Activated T-helper 2 cell treated with anti-CD3 and anti-CD28 coated beads, Interferon-gamma antibody, Interleukin-2, Interleukin-4, amounts not matched to agents 10 μg/mL and 5 μg/mL and 100 μg/mL, durations not matched to agents 14 hours and 24 hours and 36 hours (primary cell): ENCODE measurements at regions of chr7 and their contacts with region 1.

Region 1: DNA sequence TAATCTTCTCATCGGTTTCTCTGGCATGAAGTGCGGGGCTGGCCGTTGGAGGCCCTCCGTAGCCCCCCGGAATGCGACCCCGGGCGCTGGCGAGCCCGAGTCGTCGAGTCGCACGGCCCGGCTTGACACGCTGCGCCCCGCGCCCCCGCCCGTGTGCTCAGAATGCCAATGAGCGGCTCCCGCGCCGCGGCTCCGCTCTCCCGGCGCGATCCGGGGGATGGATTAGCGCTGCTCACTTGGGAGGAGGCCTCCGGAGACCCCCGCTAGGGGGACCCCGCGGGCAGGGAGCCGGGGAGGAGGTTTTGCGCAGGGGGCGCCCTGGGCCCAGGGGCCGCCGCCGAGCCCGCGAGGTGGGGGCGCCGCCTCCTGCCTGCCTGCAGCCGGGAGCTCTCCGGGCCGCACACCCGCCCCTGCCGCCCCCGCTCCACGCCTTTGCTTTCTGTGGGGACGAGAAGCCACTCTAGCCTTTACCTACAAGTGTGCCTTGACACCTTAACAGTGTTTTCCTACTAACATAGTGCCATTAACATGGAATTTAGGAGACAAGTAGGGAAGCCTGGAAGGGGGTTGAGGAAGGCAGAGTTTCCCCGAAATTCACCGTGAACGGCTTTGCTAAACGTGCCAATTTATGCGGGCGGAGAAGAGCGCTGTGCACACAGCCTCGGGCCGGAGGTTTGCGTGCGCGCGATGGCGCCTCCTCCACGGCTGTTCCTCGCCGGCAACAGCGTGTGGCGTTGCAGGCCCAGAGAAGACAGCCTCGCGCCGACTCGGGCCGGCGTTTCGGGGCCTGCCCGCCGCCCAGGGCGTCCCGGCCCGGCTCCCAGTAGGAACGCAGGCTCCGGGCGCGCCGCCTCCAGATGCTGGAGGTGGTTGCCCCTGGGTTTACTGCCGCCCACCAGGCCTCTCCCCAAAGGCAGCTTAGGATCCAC is 7.1 kb downstream of the SHH start:
- DNase-seq: peak; percentile 51
- H3K4me3 Mint-ChIP-seq: peak overlapping the region; percentile 42
- H3K27ac Mint-ChIP-seq: no peak overlapping the region
- H3K4me1 Mint-ChIP-seq: peaks cover 17% of the 10 kb centered on the region
- H3K27me3 Mint-ChIP-seq: peaks cover 59% of the 10 kb centered on the region

Region 2: GRCh38 chr7:155380221-155380861 is 424.8 kb before region 1 on chr7:
- intact Hi-C with region 1: loop called (anchors 2 kb)
- DNase-seq: peak; percentile 57
- H3K4me3 Mint-ChIP-seq: no peak overlapping the region
- H3K27ac Mint-ChIP-seq: no peak overlapping the region
- H3K4me1 Mint-ChIP-seq: peaks cover 15% of the 10 kb centered on the region
- H3K27me3 Mint-ChIP-seq: peaks cover 83% of the 10 kb centered on the region

Region 3: GRCh38 chr7:155466814-155467733 is 338.1 kb before region 1 on chr7:
- intact Hi-C with region 1: loop called (anchors 2 kb)
- DNase-seq: peak; percentile 38
- H3K4me3 Mint-ChIP-seq: no peak overlapping the region
- H3K27ac Mint-ChIP-seq: no peak overlapping the region
- H3K4me1 Mint-ChIP-seq: peaks cover 3% of the 10 kb centered on the region
- H3K27me3 Mint-ChIP-seq: peaks cover 81% of the 10 kb centered on the region

Region 4: GRCh38 chr7:155483868-155484325 is 321.3 kb before region 1 on chr7:
- intact Hi-C with region 1: no loop called
- DNase-seq: no peak
- H3K4me3 Mint-ChIP-seq: no peak overlapping the region
- H3K27ac Mint-ChIP-seq: no peak overlapping the region
- H3K4me1 Mint-ChIP-seq: peaks cover 7% of the 10 kb centered on the region
- H3K27me3 Mint-ChIP-seq: peaks cover 41% of the 10 kb centered on the region

Region 5: DNA sequence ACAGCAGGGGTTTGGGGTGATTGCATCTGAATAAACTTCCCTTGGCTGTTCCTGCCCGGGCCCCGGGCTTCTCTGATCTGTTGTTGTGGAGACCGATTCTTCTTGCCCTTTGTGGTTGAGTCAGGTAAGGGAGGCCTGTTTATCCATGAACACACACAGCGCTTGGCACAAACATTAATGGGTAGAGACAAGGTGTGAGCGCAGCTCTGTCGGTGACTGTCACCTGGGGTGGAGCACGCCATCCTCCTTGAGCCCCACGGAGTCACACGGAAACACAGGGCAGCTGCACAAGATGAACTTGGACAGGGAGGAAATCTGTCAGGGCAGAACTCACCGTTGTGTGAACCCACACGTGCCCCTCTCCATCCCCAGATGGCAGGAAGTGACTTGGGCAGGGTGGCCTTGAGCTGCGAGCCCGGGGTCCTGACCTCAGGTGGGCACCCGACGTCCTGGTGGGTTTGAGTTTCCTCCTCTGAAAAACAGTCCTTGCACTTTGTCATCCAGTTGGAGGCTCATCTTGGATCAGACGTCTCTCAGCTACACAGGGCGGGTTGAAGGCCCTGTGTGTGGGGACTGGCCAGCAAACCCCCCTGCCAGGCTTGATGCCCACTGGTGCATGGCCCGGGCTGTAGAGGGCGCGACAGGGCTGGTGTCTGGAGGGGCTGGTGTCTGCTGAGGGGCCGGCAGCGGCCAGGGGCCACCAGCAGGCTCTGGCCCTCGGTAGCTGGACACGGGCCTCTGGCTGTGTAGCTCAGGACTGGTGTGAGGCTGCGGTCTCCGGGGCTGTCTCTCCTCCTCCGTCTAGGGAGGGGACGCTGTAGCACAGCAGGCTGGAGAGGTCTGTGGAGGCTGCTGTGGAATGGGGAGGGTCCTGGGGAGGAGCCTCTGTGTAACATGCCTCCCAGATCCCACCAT is 31.3 kb after region 1 on chr7:
- intact Hi-C with region 1: no loop called
- DNase-seq: no peak
- H3K4me3 Mint-ChIP-seq: no peak overlapping the region
- H3K27ac Mint-ChIP-seq: no peak overlapping the region
- H3K4me1 Mint-ChIP-seq: no peaks in the 10 kb centered on the region
- H3K27me3 Mint-ChIP-seq: no peaks in the 10 kb centered on the region

Region 6: DNA sequence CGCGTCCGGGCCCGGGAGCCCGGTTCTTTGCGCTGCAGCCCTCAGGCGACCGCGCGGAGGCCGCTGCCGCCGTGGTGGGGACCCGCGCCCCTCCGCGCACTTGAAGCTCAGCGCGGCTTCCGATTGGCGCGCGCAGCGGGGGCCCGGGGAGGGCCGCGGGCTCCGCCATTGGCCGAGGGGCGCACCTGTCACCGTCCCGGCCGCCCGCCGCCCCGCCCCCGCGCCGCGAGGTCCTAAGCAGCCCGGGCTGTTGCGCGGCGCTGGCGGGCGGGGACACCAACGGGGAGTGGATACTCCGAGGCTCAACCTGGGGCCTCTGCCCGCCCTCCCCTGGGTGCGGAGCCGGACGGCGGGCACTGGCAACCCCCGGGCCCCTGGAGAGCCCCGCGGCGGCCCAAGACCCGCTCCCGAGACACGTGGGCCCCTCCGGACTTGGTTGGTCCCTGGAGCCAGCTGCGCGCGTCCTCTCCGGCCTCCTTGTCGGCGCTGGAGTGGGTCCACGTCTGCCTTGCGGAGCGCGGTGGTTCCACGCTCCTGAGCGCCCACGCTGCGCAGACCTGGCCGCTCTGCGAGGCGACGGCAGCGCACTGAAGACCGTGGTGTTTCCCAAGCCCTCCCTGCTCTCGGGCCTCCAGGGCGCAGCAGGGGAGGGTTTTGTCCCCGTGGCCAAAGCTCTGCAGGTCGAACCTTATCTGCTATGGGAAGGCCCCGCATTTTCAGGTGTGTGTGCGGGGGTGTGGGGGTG is 1205.6 kb after region 1 on chr7 and contains the start of gene MNX1:
- intact Hi-C with region 1: loop called (anchors 2 kb)
- DNase-seq: peak; percentile 43
- H3K4me3 Mint-ChIP-seq: peak within 1 kb of the TSS; percentile 39
- H3K27ac Mint-ChIP-seq: no peak within 1 kb of the TSS
- H3K4me1 Mint-ChIP-seq: peaks cover 6% of the 10 kb centered on the region
- H3K27me3 Mint-ChIP-seq: peaks cover 72% of the 10 kb centered on the region
- total RNA-seq, gene MNX1: 0.09 TPM in 1 of 2 replicates, not detected in the other